T-cell (primary cell): ENCODE measurements at regions of chr3 and their contacts with region 1.

Region 1: GRCh38 chr3:142129516-142130171 is 19.7 kb downstream of the TFDP2 start:
- DNase-seq: no peak
- ATAC-seq: no peak
- H3K4me3 ChIP-seq: no peak overlapping the region
- H3K4me3 Mint-ChIP-seq: no peak overlapping the region
- H3K27ac ChIP-seq: no peak overlapping the region
- H3K27ac Mint-ChIP-seq: no peak overlapping the region
- H3K4me1 ChIP-seq: peaks cover 0 to 2% of the 10 kb centered on the region in 2 experiments
- H3K4me1 Mint-ChIP-seq: peaks cover 0 to 15% (median 2%) of the 10 kb centered on the region in 3 donors
- H3K27me3 ChIP-seq: no peaks in the 10 kb centered on the region
- H3K27me3 Mint-ChIP-seq: no peaks in the 10 kb centered on the region

Region 2: GRCh38 chr3:142165194-142165593 is 35.5 kb after region 1 on chr3:
- CTCF ChIA-PET with region 1: no interaction called
- POLR2A ChIA-PET with region 1: interaction called, 7 to 11 read pairs
- DNase-seq: no peak
- ATAC-seq: no peak
- H3K4me3 ChIP-seq: no peak overlapping the region
- H3K4me3 Mint-ChIP-seq: no peak overlapping the region
- H3K27ac ChIP-seq: no peak overlapping the region
- H3K27ac Mint-ChIP-seq: no peak overlapping the region
- H3K4me1 ChIP-seq: no peaks in the 10 kb centered on the region
- H3K4me1 Mint-ChIP-seq: no peaks in the 10 kb centered on the region
- H3K27me3 ChIP-seq: no peaks in the 10 kb centered on the region
- H3K27me3 Mint-ChIP-seq: no peaks in the 10 kb centered on the region

Region 3: GRCh38 chr3:142218703-142219102 is 89.1 kb after region 1 on chr3:
- CTCF ChIA-PET with region 1: interaction called in 1 of 2 experiments, 3 read pairs
- POLR2A ChIA-PET with region 1: interaction called in 1 of 2 experiments, 10 read pairs
- DNase-seq: no peak
- ATAC-seq: no peak
- H3K4me3 ChIP-seq: no peak overlapping the region
- H3K4me3 Mint-ChIP-seq: no peak overlapping the region
- H3K27ac ChIP-seq: no peak overlapping the region
- H3K27ac Mint-ChIP-seq: no peak overlapping the region
- H3K4me1 ChIP-seq: peaks cover 0 to under 1% of the 10 kb centered on the region in 2 experiments
- H3K4me1 Mint-ChIP-seq: peaks cover 3 to 28% (median 28%) of the 10 kb centered on the region in 3 donors
- H3K27me3 ChIP-seq: no peaks in the 10 kb centered on the region
- H3K27me3 Mint-ChIP-seq: no peaks in the 10 kb centered on the region

Region 4: DNA sequence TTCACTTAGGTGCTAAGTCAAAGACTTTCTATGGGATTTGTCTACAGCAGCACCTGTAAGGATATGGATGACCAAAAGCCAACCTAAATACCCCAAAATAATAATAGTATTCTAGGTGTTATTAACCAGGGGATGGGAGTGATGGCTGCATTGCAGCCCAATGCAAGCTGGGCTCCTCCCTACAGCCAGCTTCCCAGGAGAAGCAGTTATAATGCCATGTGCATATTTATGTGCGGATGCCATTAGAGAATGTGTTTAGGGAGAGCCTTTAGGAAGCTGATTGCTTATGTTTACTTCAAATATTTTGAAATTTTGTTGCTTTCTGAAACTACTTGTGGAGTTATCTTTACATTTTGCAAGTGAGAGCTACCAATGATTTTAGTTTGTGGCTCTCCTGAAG is 1227.2 kb after region 1 on chr3:
- CTCF ChIA-PET with region 1: interaction called in 1 of 2 experiments, 11 read pairs
- POLR2A ChIA-PET with region 1: no interaction called
- DNase-seq: no peak
- ATAC-seq: no peak
- H3K4me3 ChIP-seq: no peak overlapping the region
- H3K4me3 Mint-ChIP-seq: no peak overlapping the region
- H3K27ac ChIP-seq: no peak overlapping the region
- H3K27ac Mint-ChIP-seq: no peak overlapping the region
- H3K4me1 ChIP-seq: peaks cover 0 to 4% of the 10 kb centered on the region in 2 experiments
- H3K4me1 Mint-ChIP-seq: peaks cover 4 to 19% (median 8%) of the 10 kb centered on the region in 3 donors
- H3K27me3 ChIP-seq: no peaks in the 10 kb centered on the region
- H3K27me3 Mint-ChIP-seq: no peaks in the 10 kb centered on the region